Motor neuron (in vitro differentiated cells): ENCODE measurements at regions of chr17 and their contacts with region 1.

Region 1: GRCh38 chr17:82668631-82669099 is 20.4 kb upstream of the WDR45B start:
- ATAC-seq: peak; percentile 33 to 100 (median 68)
- H3K4me3 ChIP-seq: no peak overlapping the region
- H3K27ac ChIP-seq: no peak overlapping the region
- H3K4me1 ChIP-seq: peaks cover 12 to 14% of the 10 kb centered on the region in 2 donors

Region 2: GRCh38 chr17:82037113-82037888 is 631.4 kb before region 1 on chr17 and contains the start of gene DCXR:
- in situ Hi-C with region 1: no loop called
- ATAC-seq: peak; percentile 89 to 96 (median 92)
- H3K4me3 ChIP-seq: peak within 1 kb of the TSS; percentile 60 to 84 (median 64)
- H3K27ac ChIP-seq: peak within 1 kb of the TSS; percentile 78 to 81
- H3K4me1 ChIP-seq: peaks cover 12 to 17% of the 10 kb centered on the region in 2 donors
- total RNA-seq, gene DCXR: 55.7 to 94.5 (median 80.7) TPM

Region 3: DNA sequence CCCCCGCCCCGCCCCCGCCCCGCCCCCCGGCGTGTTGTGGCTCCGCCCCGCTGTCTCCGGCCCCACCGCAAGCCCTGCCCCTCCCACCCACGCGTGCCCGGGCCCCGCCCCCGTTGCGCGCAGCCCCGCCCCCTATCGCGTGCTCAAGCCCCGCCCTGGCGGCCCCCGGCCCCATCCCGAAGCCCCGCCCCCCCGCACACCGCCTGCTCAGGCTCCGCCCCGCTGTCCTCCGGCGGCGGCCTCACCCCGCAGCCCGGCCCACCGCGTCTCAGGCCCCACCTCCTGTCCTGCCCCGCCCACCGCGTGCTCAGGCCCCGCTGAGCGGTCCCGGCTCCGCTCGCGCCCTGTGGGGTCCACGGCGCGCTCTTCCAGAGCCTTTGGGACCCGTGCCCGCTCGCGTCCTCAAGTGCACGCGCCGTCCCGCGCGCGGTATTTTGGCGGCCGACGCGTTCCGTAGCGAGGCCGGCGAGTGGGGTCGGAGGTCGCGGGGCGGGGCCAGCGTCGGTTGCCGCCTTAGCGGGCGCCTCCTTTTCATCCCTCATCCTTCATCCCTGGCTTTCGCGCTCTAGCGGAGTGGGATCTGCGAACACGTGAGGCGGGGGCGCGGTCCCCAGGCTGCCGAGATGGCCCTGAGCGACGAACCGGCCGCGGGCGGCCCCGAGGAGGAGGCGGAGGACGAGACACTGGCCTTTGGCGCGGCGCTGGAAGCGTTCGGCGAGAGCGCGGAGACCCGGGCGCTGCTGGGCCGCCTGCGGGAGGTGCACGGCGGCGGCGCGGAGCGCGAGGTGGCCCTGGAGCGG is 83.1 kb after region 1 on chr17 and contains the start of gene TBCD:
- in situ Hi-C with region 1: loop called in 1 of 9 experiments (anchors 25 kb)
- ATAC-seq: peak; percentile 74 to 87 (median 79)
- H3K4me3 ChIP-seq: peak within 1 kb of the TSS; percentile 54 to 97 (median 72)
- H3K27ac ChIP-seq: peak within 1 kb of the TSS; percentile 79 to 85
- H3K4me1 ChIP-seq: peaks cover 21 to 23% of the 10 kb centered on the region in 2 donors
- total RNA-seq, gene TBCD: 27.2 to 94.3 (median 47.2) TPM

Region 4: DNA sequence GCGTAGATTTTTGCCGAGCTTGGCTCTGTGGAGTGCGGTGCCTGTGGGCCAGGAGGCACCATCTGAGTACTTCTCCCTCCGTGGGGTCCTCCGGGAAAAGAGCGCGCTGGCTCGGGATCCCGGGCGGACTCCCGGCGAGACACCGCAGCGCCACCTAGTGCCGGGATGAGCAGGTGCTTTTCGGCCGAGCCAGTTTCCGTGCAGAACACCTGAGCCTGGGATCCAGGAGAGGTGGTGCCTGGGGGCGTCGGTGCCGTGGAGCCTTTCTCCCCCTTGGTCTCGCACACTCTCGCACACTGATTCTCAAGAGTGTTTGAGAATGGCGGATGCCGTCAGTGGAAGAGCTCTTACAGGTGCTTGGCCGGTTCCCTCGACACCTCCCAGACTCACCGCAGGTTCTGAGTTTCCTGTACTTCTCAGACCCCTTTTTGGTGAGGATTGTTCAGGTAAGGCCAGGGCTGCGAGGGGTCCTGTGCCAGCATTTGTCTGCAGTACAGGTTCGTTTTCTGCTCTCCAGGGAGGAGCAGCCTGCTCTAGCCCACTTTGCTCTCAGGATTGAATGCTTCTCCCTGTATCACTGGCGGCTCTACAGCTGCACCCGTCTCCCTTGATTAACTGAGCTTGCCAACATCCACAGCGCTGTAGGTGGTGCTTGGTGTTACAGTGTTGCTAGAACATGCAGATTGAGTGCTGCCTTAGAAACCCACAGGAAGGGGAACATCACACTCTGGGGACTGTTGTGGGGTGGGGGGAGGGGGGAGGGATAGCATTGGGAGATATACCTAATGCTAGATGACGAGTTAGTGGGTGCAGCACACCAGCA is 106.5 kb after region 1 on chr17:
- in situ Hi-C with region 1: loop called in 2 of 9 experiments (anchors 10 to 25 kb)
- ATAC-seq: peak; percentile 31 to 81 (median 56)
- H3K4me3 ChIP-seq: no peak overlapping the region
- H3K27ac ChIP-seq: no peak overlapping the region
- H3K4me1 ChIP-seq: no peaks in the 10 kb centered on the region